Mammary epithelial cell (primary cell): ENCODE measurements at regions of chr7 and their contacts with region 1.

Region 1: GRCh38 chr7:29189743-29190201 is 4.8 kb upstream of the CHN2 start:
- DNase-seq: peak; percentile 34
- H3K4me3 ChIP-seq: no peak overlapping the region
- H3K27ac ChIP-seq: no peak overlapping the region
- H3K4me1 ChIP-seq: peaks cover 4% of the 10 kb centered on the region
- H3K27me3 ChIP-seq: peaks cover 2% of the 10 kb centered on the region
- CTCF ChIP-seq: peak; percentile 83 to 92

Region 2: GRCh38 chr7:28926871-28927597 is 262.7 kb before region 1 on chr7:
- CTCF ChIA-PET with region 1: no interaction called
- dilution Hi-C with region 1: no loop called
- in situ Hi-C with region 1: no loop called
- intact Hi-C with region 1: loop called (anchors 1 kb)
- DNase-seq: peak; percentile 74
- H3K4me3 ChIP-seq: peak overlapping the region; percentile 52 to 59 (median 58)
- H3K27ac ChIP-seq: no peak overlapping the region
- H3K4me1 ChIP-seq: peaks cover 5% of the 10 kb centered on the region
- H3K27me3 ChIP-seq: no peaks in the 10 kb centered on the region
- CTCF ChIP-seq: peak; percentile 76 to 77

Region 3: GRCh38 chr7:29239638-29240037 is 49.9 kb after region 1 on chr7:
- CTCF ChIA-PET with region 1: interaction called, 5 read pairs
- dilution Hi-C with region 1: no loop called
- in situ Hi-C with region 1: no loop called
- intact Hi-C with region 1: loop called (anchors 2 kb)
- DNase-seq: no peak
- H3K4me3 ChIP-seq: no peak overlapping the region
- H3K27ac ChIP-seq: no peak overlapping the region
- H3K4me1 ChIP-seq: no peaks in the 10 kb centered on the region
- H3K27me3 ChIP-seq: no peaks in the 10 kb centered on the region
- CTCF ChIP-seq: peak; percentile 79 to 87

Region 4: DNA sequence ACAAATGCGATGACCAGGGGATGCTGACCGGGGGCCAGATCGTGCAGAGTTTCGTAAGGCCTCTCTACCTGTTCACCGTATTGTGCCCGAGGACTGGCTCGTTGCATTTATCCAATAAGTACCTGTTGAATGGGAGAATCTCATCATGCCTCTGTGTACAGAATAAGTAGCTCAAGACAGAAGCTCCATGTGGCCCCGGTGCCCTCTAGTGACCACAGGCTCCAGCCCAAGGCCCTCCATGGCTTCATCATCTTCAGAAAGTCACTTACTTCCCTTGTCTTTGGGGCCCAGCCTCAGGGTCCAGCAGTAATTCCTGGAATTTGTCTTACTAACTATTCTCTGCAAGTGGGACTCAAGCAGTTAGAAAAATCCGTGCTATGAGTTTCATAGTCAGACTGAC is 155.8 kb after region 1 on chr7:
- CTCF ChIA-PET with region 1: interaction called, 6 read pairs
- dilution Hi-C with region 1: no loop called
- in situ Hi-C with region 1: no loop called
- intact Hi-C with region 1: loop called (anchors 1 kb)
- DNase-seq: peak; percentile 29
- H3K4me3 ChIP-seq: no peak overlapping the region
- H3K27ac ChIP-seq: no peak overlapping the region
- H3K4me1 ChIP-seq: peaks cover 36% of the 10 kb centered on the region
- H3K27me3 ChIP-seq: no peaks in the 10 kb centered on the region
- CTCF ChIP-seq: peak; percentile 52 to 73

Region 5: GRCh38 chr7:29892231-29892630 is 702.5 kb after region 1 on chr7:
- CTCF ChIA-PET with region 1: interaction called, 13 read pairs
- dilution Hi-C with region 1: no loop called
- in situ Hi-C with region 1: no loop called
- intact Hi-C with region 1: no loop called
- DNase-seq: no peak
- H3K4me3 ChIP-seq: no peak overlapping the region
- H3K27ac ChIP-seq: no peak overlapping the region
- H3K4me1 ChIP-seq: no peaks in the 10 kb centered on the region
- H3K27me3 ChIP-seq: no peaks in the 10 kb centered on the region
- CTCF ChIP-seq: no peak